ENCODE measurements at regions of chr2 and their contacts with region 1.

Region 1: GRCh38 chr2:165401285-165401852 is 68.1 kb upstream of the CSRNP3 start:
- DNase-seq: peak in 1 of 5 donors; percentile 30
- H3K4me3 ChIP-seq: no peak overlapping the region
- H3K27ac ChIP-seq: no peak overlapping the region
- H3K4me1 ChIP-seq: no peaks in the 10 kb centered on the region
- H3K27me3 ChIP-seq: no peaks in the 10 kb centered on the region
- CTCF ChIP-seq: peak; percentile 28 to 75 (median 70)
- EP300 ChIP-seq: no peak
- POLR2A ChIP-seq: no peak

Region 2: DNA sequence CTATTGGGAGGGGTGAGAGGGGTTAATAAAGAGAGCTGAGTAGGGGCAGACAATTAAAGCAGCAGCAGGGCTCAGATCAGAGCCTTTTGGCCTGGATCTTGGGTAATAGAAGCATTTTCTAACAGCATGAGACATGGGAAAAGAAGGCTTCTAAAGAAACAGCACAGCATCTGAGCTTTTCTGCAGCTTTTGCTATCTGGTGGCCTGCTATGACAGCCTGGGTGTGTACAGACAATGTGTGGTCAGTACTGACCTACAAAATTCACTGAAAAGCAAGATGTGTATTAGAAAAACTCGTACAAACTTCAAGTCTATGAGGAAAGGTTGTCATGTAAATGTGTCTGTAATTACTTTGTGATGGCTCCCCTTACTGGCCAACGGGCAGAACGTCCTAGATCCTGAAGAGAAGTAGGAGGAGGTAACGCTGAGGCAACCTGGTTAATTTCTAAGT is 297.1 kb after region 1 on chr2:
- intact Hi-C with region 1: loop called in 3 of 4 experiments (anchors 1 to 10 kb)
- DNase-seq: peak; percentile 13 to 48 (median 34)
- H3K4me3 ChIP-seq: no peak overlapping the region
- H3K27ac ChIP-seq: no peak overlapping the region
- H3K4me1 ChIP-seq: no peaks in the 10 kb centered on the region
- H3K27me3 ChIP-seq: no peaks in the 10 kb centered on the region
- CTCF ChIP-seq: peak in 1 of 3 donors; percentile 36
- EP300 ChIP-seq: no peak
- POLR2A ChIP-seq: no peak

Measured in ovary (tissue), 10 donors.